Adrenal gland (tissue), 19 donors: ENCODE measurements at regions of chr12 and their contacts with region 1.

Region 1: DNA sequence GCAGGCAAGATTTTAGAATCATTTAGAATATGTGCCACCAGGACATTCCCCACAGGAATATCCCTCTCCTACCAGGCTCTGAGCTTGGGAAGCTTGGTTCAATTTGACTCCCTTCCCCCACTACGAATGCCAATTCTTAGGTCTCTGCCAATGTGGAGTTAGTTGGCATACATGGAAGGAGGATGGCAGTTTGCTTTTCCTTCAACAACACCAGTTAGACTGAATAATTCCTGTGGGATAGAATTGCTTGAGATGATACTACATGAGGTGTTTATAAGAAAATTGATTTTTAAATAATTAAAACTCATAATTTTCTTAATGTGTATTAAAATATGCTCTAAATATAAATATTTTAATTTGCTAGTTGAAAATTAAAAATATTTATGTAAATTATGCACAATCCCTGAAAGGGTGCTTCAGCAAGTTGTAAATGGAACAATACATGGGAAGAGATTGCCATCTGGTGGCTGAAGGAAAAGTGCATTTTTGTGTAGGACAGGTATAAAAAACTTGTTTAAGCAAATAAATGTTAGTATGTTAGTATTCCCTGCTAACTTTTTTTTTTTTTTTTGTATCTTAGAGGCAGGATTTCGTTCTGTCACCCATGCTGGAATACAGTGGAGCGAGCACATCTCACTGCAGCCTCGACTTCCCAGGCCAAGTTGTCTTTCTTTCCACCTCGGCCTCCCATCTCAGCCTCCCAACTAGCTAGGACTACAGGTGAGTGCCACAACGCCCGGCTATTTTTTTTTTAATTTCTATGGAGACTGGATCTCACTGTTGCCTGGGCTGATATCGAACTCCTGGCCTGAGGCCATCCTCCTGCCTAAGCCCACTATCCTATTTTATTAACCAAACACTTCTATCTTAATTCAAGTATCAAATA is 25.8 kb upstream of the STRAP start:
- DNase-seq: peak; percentile 26 to 69 (median 58)
- H3K4me3 ChIP-seq: no peak overlapping the region
- H3K27ac ChIP-seq: no peak overlapping the region
- H3K4me1 ChIP-seq: no peaks in the 10 kb centered on the region
- H3K27me3 ChIP-seq: peaks cover 7% of the 10 kb centered on the region
- CTCF ChIP-seq: peak; percentile 67 to 95 (median 88)
- POLR2A ChIP-seq: no peak

Region 2: GRCh38 chr12:15584366-15585041 is 271.8 kb before region 1 on chr12:
- intact Hi-C with region 1: loop called in 1 of 2 experiments (anchors 5 kb)
- DNase-seq: peak in 4 of 7 donors; percentile 21 to 39 (median 28)
- H3K4me3 ChIP-seq: no peak overlapping the region
- H3K27ac ChIP-seq: no peak overlapping the region
- H3K4me1 ChIP-seq: no peaks in the 10 kb centered on the region
- H3K27me3 ChIP-seq: no peaks in the 10 kb centered on the region
- CTCF ChIP-seq: peak; percentile 29 to 65 (median 57)
- POLR2A ChIP-seq: no peak

Region 3: DNA sequence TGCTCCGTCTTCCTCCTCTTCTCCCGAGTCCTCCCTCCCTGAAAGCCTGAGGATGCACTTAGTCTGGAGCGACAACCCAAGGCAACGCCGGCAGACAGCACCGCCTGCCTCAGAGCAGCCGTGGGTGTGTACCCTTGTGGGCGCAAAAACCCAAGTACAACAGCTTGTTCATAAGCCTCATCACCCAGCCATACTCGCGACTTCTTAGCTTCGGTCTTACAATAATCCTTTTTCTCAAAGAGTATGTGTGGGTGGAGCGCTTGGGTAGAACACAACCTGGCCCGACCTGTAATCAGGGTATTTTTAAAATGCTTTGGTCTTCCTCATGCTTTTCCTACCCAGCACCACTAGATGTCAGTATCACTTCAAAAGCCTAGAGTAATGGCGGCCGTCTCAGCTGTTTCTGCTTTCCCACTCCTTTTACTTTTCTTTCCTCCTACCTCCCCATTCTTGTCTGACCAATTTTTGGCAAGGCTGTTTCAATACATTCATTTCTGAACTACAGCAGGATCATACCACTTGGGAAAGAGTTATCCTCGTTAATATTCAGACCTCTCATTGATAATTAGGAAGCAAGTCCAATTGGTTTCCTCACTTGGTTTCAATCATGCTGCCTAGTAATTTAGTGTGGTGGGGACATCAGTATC is 266.0 kb before region 1 on chr12:
- intact Hi-C with region 1: loop called (anchors 5 kb)
- DNase-seq: peak; percentile 37 to 69 (median 53)
- H3K4me3 ChIP-seq: peak overlapping the region in 1 of 4 donors; percentile 51
- H3K27ac ChIP-seq: peak overlapping the region in 1 of 5 donors; percentile 7
- H3K4me1 ChIP-seq: no peaks in the 10 kb centered on the region
- H3K27me3 ChIP-seq: no peaks in the 10 kb centered on the region
- CTCF ChIP-seq: peak; percentile 71 to 96 (median 90)
- POLR2A ChIP-seq: no peak

Region 4: GRCh38 chr12:15899282-15899870 is 43.0 kb after region 1 on chr12:
- intact Hi-C with region 1: no loop called
- DNase-seq: peak in 1 of 7 donors; percentile 11
- H3K4me3 ChIP-seq: no peak overlapping the region
- H3K27ac ChIP-seq: no peak overlapping the region
- H3K4me1 ChIP-seq: peaks cover 4% of the 10 kb centered on the region in 2 donors
- H3K27me3 ChIP-seq: no peaks in the 10 kb centered on the region
- CTCF ChIP-seq: peak; percentile 33 to 76 (median 57)
- POLR2A ChIP-seq: no peak